Esophagus squamous epithelium (tissue), 5 donors: ENCODE measurements at regions of chr5 and their contacts with region 1.

Region 1: DNA sequence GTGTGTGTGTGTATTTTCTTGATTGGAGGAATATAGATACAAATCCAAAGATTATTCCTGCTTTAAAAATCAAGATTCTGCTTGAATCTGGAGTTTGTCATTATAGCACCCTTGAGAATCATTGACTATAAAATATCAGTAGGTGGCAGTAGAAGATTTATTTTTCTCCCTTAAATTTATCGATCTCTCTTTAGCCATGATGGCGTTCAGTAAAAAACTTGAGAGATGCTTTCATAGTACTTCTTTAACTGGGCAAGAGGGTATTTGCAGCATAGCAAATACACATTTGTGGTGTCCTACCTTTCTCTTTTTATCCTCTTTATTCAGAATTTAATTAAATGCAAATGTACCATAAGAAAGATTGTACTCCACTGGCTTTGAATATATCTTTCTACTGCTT is 307.7 kb downstream of the ADGRV1 start:
- DNase-seq: no peak
- H3K4me3 ChIP-seq: no peak overlapping the region
- H3K27ac ChIP-seq: no peak overlapping the region
- H3K4me1 ChIP-seq: peaks cover 0 to 6% (median 0%) of the 10 kb centered on the region in 3 donors
- H3K27me3 ChIP-seq: no peaks in the 10 kb centered on the region
- CTCF ChIP-seq: peak in 4 of 6 experiments; percentile 41 to 65 (median 54)
- POLR2A ChIP-seq: no peak

Region 2: DNA sequence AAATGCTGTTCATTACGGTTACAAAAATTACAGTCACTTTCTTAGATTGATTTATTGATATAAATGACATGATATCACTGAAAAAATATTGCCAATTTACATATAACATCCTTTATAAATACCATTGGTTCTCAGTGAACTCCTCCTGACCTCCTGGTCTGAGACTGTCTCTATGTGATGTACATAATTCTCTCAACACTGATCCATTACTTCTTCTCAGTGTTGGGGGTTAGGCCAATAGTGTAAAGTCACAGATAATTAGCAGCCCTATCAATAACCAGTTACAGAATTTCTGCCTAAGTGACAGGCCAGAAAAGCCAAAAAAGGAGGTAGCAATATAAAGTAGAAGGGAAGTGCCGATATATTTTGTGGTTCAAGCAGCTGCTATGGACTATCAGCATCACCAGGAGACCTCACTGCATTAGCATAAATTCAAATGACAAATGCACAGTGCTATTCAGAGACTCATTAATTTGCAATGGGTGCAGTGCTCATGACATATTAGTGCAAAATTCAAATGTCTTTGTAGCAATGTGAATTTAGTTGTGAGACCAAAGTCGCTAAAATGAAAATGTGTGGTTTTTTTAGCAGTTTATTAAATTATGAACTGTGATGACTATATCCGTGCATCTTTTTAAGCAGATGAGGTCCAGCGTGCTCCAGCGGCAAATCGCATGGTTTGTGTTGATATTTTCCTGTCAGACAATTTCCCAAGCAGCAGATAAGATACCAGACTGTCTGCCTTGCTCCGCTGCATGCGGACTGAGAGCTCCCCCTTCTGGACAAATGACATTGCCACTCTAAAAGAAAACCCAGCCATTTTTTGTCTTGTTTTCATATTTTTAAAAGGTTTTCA is 601.4 kb before region 1 on chr5:
- intact Hi-C with region 1: no loop called
- DNase-seq: no peak
- H3K4me3 ChIP-seq: no peak overlapping the region
- H3K27ac ChIP-seq: no peak overlapping the region
- H3K4me1 ChIP-seq: peaks cover 0 to 6% (median 0%) of the 10 kb centered on the region in 3 donors
- H3K27me3 ChIP-seq: no peaks in the 10 kb centered on the region
- CTCF ChIP-seq: peak; percentile 70 to 88 (median 79)
- POLR2A ChIP-seq: no peak

Region 3: GRCh38 chr5:90759119-90759518 is 107.2 kb before region 1 on chr5:
- intact Hi-C with region 1: no loop called
- DNase-seq: no peak
- H3K4me3 ChIP-seq: no peak overlapping the region
- H3K27ac ChIP-seq: no peak overlapping the region
- H3K4me1 ChIP-seq: no peaks in the 10 kb centered on the region
- H3K27me3 ChIP-seq: no peaks in the 10 kb centered on the region
- CTCF ChIP-seq: no peak
- POLR2A ChIP-seq: no peak

Region 4: GRCh38 chr5:91101600-91102379 is 235.5 kb after region 1 on chr5:
- intact Hi-C with region 1: loop called (anchors 10 kb)
- DNase-seq: peak; percentile 10
- H3K4me3 ChIP-seq: no peak overlapping the region
- H3K27ac ChIP-seq: no peak overlapping the region
- H3K4me1 ChIP-seq: peaks cover 0 to 18% (median 3%) of the 10 kb centered on the region in 3 donors
- H3K27me3 ChIP-seq: no peaks in the 10 kb centered on the region
- CTCF ChIP-seq: peak in 5 of 6 experiments; percentile 68 to 89 (median 79)
- POLR2A ChIP-seq: no peak

Region 5: DNA sequence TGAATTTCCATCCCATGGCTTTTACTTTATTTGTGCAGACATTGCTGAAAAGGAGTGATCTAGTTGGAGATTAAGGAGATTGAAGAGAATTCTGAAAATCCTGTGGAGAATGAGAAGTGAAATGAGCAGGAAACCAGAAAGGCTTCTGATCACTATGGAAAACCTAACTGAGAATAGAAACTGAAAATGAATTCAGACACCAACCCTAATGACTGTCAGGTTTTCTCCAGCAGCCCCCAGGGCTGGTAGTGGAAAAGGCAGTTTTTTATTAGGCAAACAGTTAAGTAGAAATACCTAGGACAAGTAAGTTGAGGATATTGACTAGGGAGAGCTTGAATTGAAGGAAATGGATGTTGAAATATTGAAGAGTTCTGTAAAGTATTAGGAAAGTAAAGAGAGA is 531.5 kb after region 1 on chr5:
- intact Hi-C with region 1: loop called (anchors 10 kb)
- DNase-seq: no peak
- H3K4me3 ChIP-seq: no peak overlapping the region
- H3K27ac ChIP-seq: no peak overlapping the region
- H3K4me1 ChIP-seq: no peaks in the 10 kb centered on the region
- H3K27me3 ChIP-seq: no peaks in the 10 kb centered on the region
- CTCF ChIP-seq: no peak
- POLR2A ChIP-seq: no peak